ENCODE measurements at regions of chr13 and their contacts with region 1.

Region 1: DNA sequence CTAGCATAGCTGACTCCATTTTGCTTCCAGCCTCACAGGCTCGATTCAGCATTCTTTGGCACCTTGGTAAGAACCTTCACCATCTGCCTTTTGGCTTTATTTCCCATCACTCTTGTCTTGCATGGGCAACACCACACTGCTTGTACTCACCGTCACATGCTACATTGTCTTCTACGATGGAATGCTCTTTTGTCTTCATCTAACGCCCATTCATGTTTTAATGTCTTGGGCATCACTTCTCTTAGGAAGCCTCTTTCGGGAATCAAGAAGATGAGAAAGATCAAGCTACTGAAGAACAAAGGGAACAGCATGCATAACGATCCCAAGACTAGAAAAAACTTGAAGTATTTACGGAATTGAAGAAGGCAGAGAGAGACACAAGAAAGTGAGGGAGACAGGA is 5.7 kb upstream of the RPL21 start:
- DNase-seq: no peak
- ATAC-seq: no peak
- H3K4me3 ChIP-seq: no peak overlapping the region
- H3K27ac ChIP-seq: no peak overlapping the region
- H3K4me1 ChIP-seq: peaks cover 0 to 11% (median 5%) of the 10 kb centered on the region in 12 donors
- H3K27me3 ChIP-seq: no peaks in the 10 kb centered on the region
- CTCF ChIP-seq: no peak
- POLR2A ChIP-seq: no peak

Region 2: GRCh38 chr13:27177852-27178251 is 67.8 kb before region 1 on chr13:
- intact Hi-C with region 1: loop called in 6 of 10 experiments (anchors 5 kb)
- DNase-seq: no peak
- ATAC-seq: no peak
- H3K4me3 ChIP-seq: no peak overlapping the region
- H3K27ac ChIP-seq: no peak overlapping the region
- H3K4me1 ChIP-seq: peaks cover 0 to 26% (median 3%) of the 10 kb centered on the region in 12 donors
- H3K27me3 ChIP-seq: no peaks in the 10 kb centered on the region
- CTCF ChIP-seq: no peak
- POLR2A ChIP-seq: no peak

Region 3: DNA sequence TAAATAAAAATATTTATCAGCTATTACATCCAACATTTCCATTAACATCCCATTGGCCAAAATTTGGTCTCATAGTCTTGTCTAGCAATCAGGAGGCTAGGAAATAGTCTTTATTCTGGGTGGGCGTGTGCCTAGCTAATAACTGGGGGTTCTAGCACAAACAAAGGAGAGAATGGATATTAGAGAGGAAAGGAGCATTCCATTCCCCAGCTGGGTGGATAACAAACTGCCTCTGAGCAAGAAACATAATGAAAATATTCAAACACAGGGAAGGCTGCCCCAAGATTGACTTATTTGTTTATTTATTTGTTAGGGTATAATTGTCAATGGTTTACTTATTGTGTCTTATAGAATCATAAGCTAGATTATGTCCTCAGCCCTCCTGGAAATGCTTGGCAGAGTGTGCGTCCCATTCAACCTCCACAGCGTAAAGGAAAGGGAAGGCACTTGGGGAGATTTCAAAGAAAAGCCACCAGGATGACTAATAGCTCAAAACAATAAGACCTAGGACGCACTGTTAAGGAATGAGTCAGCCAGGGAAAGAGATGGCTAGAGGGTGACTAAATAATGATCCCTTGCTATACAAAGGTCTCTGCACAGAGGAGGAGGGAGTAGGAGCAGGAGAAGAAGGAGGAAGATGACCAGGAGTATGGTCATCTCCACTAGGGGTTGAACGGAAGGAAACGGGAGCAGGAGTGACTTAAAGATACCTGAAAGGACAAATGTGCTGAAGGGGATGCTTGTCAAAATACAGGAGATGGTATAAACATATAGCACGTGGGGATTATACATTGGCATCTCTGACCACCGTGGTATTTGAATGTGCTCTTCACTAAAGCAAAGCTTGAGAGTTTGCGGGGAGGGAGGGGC is 50.5 kb before region 1 on chr13:
- intact Hi-C with region 1: loop called in 1 of 10 experiments (anchors 5 kb)
- DNase-seq: no peak
- ATAC-seq: peak in 3 of 4 donors; percentile 71 to 91 (median 83)
- H3K4me3 ChIP-seq: no peak overlapping the region
- H3K27ac ChIP-seq: peak overlapping the region in 2 of 12 donors; percentile 29 to 34
- H3K4me1 ChIP-seq: peaks cover 0 to 4% (median 0%) of the 10 kb centered on the region in 12 donors
- H3K27me3 ChIP-seq: no peaks in the 10 kb centered on the region
- CTCF ChIP-seq: no peak
- POLR2A ChIP-seq: no peak

Measured in heart left ventricle (tissue), 16 donors.